HCT116 (cell line): ENCODE measurements at regions of chr11 and their contacts with region 1.

Region 1: DNA sequence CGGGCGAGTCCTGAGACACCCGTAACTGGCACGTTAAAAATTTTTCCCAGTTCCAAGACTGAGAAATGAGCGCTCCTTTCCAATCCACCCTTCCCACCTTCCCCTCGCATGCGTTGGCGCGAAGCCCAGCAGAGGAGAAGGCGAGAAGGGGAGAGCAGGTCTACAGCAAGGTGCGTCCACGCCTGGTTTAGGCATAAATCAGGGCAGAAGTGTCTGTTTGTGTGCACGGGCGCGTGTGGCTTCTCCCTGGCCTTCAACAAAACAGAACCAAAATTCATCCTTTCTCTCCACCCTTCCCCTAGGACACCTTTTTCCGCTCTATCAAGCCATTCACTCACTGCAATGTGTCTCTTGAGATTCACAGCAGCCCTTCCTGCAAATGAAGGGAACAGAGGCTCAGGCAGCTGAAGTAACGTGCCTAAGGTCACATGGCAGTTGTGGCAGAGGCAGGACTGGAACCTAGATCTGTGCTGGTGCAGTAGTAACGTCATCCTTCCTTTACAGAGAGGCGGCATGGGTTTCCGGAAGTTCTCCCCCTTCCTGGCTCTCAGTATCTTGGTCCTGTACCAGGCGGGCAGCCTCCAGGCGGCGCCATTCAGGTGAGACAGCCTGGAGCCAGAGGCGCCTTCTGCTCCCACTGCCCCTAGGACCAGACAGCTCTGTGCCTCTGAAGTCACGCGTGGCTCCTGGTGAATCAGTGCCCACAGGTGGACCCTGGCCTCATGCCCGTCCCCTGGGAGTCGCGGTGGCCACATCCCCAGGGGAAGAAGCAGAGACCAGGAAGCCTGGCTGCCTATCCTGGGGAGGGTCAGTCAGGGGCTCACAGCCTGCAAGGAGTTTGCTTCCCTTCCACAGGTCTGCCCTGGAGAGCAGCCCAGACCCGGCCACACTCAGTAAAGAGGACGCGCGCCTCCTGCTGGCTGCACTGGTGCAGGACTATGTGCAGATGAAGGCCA is 1.1 kb downstream of the CALCB start:
- DNase-seq: peak; percentile 83
- ATAC-seq: peak; percentile 95
- H3K4me3 ChIP-seq: peak overlapping the region; percentile 7 to 21; a peak in 2 of 4 replicates
- H3K27ac ChIP-seq: peak overlapping the region; percentile 56
- H3K4me1 ChIP-seq: peaks cover 7 to 11% of the 10 kb centered on the region in 2 experiments; a peak in 2 of 4 replicates
- H3K27me3 ChIP-seq: no peaks in the 10 kb centered on the region
- CTCF ChIP-seq: peak; percentile 82 to 95 (median 85)
- POLR2A ChIP-seq: no peak
- RAD21 ChIP-seq: peak; percentile 92

Region 2: GRCh38 chr11:14789879-14790484 is 284.5 kb before region 1 on chr11:
- CTCF ChIA-PET with region 1: interaction called, 20 read pairs
- POLR2A ChIA-PET with region 1: no interaction called
- RAD21 ChIA-PET with region 1: interaction called in 1 of 2 experiments, 3 read pairs
- intact Hi-C with region 1: loop called (anchors 1 kb)
- DNase-seq: no peak
- ATAC-seq: peak; percentile 46; the same call in 1 of the 2 replicates
- H3K4me3 ChIP-seq: no peak overlapping the region
- H3K27ac ChIP-seq: no peak overlapping the region
- H3K4me1 ChIP-seq: no peaks in the 10 kb centered on the region
- H3K27me3 ChIP-seq: no peaks in the 10 kb centered on the region
- CTCF ChIP-seq: peak; percentile 33 to 64 (median 64); a peak in 5 of 6 replicates
- POLR2A ChIP-seq: no peak
- RAD21 ChIP-seq: peak; percentile 72

Region 3: GRCh38 chr11:14974515-14975251 is 99.8 kb before region 1 on chr11:
- CTCF ChIA-PET with region 1: interaction called, 21 read pairs
- POLR2A ChIA-PET with region 1: no interaction called
- RAD21 ChIA-PET with region 1: interaction called, 3 to 6 read pairs
- intact Hi-C with region 1: loop called (anchors 1 kb)
- DNase-seq: peak; percentile 54
- ATAC-seq: peak; percentile 86
- H3K4me3 ChIP-seq: no peak overlapping the region
- H3K27ac ChIP-seq: no peak overlapping the region
- H3K4me1 ChIP-seq: peaks cover 0 to 8% of the 10 kb centered on the region in 2 experiments; a peak in 1 of 4 replicates
- H3K27me3 ChIP-seq: no peaks in the 10 kb centered on the region
- CTCF ChIP-seq: peak; percentile 78 to 95 (median 90)
- POLR2A ChIP-seq: no peak
- RAD21 ChIP-seq: peak; percentile 70

Region 4: GRCh38 chr11:15038963-15039362 is 35.5 kb before region 1 on chr11:
- CTCF ChIA-PET with region 1: interaction called, 43 read pairs
- POLR2A ChIA-PET with region 1: no interaction called
- RAD21 ChIA-PET with region 1: interaction called, 5 to 6 read pairs
- intact Hi-C with region 1: loop called (anchors 1 kb)
- DNase-seq: peak; percentile 31
- ATAC-seq: peak; percentile 58; the same call in 1 of the 2 replicates
- H3K4me3 ChIP-seq: no peak overlapping the region
- H3K27ac ChIP-seq: no peak overlapping the region
- H3K4me1 ChIP-seq: peaks cover 0 to 9% of the 10 kb centered on the region in 2 experiments; a peak in 2 of 4 replicates
- H3K27me3 ChIP-seq: no peaks in the 10 kb centered on the region
- CTCF ChIP-seq: peak; percentile 27 to 84 (median 40); a peak in 4 of 6 replicates
- POLR2A ChIP-seq: no peak
- RAD21 ChIP-seq: peak; percentile 91

Region 5: DNA sequence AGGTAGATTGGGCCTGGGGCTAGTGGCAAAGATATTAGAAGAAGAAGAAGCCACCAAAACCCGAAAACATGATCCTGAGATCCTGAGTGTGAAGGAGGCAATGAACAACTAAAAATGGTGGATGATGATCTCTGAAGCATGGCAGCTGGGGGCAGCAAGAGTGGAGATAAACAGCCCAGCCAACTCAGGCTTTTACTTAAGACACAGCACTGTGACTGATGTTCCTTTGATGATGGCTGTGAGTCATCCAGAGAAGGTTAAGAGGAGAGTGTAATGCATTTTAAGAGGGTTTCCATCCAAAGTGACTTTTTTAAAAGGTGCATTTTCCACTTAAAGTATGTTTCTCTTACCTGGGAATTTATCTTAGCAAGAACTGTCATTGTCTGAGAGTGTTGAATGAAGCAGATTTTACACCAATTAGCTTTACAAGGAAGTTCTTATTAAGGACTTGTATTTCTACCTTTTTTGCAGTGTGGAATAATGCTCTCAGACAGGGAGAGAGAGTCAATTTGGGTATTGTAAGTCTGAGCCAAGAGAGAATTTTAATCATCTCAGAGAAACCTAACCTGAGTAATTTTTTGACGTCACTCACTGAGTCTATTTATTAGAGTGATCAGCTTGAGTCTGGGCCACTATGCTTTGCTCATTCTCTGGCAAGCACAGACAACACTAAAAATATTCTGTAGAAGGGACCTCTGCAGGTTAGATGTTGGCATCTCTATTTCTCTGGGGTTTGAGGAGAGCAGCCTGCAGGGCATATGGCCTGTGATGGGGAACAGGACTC is 15.2 kb before region 1 on chr11:
- CTCF ChIA-PET with region 1: interaction called, 12 read pairs
- POLR2A ChIA-PET with region 1: no interaction called
- RAD21 ChIA-PET with region 1: no interaction called
- intact Hi-C with region 1: no loop called
- DNase-seq: no peak
- ATAC-seq: no peak
- H3K4me3 ChIP-seq: no peak overlapping the region
- H3K27ac ChIP-seq: no peak overlapping the region
- H3K4me1 ChIP-seq: peaks cover 0 to 7% of the 10 kb centered on the region in 2 experiments; a peak in 2 of 4 replicates
- H3K27me3 ChIP-seq: no peaks in the 10 kb centered on the region
- CTCF ChIP-seq: no peak
- POLR2A ChIP-seq: no peak
- RAD21 ChIP-seq: no peak

Region 6: GRCh38 chr11:15101072-15101709 is 26.7 kb after region 1 on chr11:
- CTCF ChIA-PET with region 1: interaction called, 16 read pairs
- POLR2A ChIA-PET with region 1: no interaction called
- RAD21 ChIA-PET with region 1: no interaction called
- intact Hi-C with region 1: no loop called
- DNase-seq: peak; percentile 57
- ATAC-seq: peak; percentile 97
- H3K4me3 ChIP-seq: no peak overlapping the region
- H3K27ac ChIP-seq: no peak overlapping the region
- H3K4me1 ChIP-seq: peaks cover 5 to 14% of the 10 kb centered on the region in 2 experiments
- H3K27me3 ChIP-seq: no peaks in the 10 kb centered on the region; the same call in 1 of the 2 replicates
- CTCF ChIP-seq: peak; percentile 92 to 95 (median 93)
- POLR2A ChIP-seq: no peak
- RAD21 ChIP-seq: peak; percentile 96

Region 7: DNA sequence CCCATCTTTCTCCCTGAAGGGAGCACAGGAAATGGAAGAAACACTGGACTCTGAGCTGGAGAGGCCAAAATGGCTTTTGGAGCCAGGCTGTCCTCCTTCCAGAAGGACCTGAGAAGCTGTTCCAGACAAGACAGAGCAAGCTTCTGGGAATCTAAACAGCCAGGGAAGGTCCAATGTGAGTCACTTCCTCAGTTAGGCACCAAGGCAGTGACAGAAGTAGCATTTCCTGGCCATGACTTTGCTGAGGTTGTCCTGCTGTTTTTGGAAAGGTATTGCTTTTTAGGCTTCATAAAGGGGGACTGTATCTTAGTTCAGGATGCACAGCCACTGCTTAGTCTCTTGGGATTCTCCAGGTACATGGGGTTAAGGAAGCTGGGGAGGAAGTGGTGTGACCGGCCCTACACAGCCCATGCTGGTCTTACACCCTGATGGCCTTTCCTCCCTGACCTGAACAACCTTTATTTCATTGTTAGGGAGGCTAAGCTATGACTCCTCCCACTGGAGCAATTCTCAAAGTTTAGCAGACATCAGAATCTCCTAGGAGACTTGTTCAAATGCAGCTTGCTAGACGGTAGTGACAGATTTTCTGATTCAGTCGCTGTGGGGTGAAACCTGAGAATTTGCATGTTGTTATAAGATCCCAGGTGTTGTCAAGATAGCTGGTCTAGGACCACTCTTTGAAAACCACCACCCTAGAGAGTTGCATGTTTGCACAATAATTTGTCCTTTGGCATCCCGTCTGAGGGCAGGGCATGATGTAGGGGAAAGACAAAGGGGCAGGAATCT is 33.4 kb after region 1 on chr11:
- CTCF ChIA-PET with region 1: interaction called, 12 read pairs
- POLR2A ChIA-PET with region 1: no interaction called
- RAD21 ChIA-PET with region 1: no interaction called
- intact Hi-C with region 1: no loop called
- DNase-seq: no peak
- ATAC-seq: no peak
- H3K4me3 ChIP-seq: no peak overlapping the region
- H3K27ac ChIP-seq: no peak overlapping the region
- H3K4me1 ChIP-seq: peaks cover 22 to 37% of the 10 kb centered on the region in 2 experiments
- H3K27me3 ChIP-seq: no peaks in the 10 kb centered on the region
- CTCF ChIP-seq: no peak
- POLR2A ChIP-seq: no peak
- RAD21 ChIP-seq: no peak